ENCODE measurements at regions of chr1 and their contacts with region 1.

Region 1: GRCh38 chr1:206030714-206031113 is 7.0 kb upstream of the CTSE start:
- DNase-seq: peak; percentile 95
- H3K4me3 Mint-ChIP-seq: no peak overlapping the region
- H3K27ac Mint-ChIP-seq: no peak overlapping the region
- H3K4me1 Mint-ChIP-seq: peaks cover 32% of the 10 kb centered on the region
- H3K27me3 Mint-ChIP-seq: peaks cover 11% of the 10 kb centered on the region
- CTCF ChIP-seq: peak; percentile 95

Region 2: GRCh38 chr1:205791568-205792180 is 239.0 kb before region 1 on chr1:
- CTCF ChIA-PET with region 1: interaction called, 10 read pairs
- POLR2A ChIA-PET with region 1: no interaction called
- intact Hi-C with region 1: no loop called
- DNase-seq: peak; percentile 89
- H3K4me3 Mint-ChIP-seq: no peak overlapping the region
- H3K27ac Mint-ChIP-seq: no peak overlapping the region
- H3K4me1 Mint-ChIP-seq: no peaks in the 10 kb centered on the region
- H3K27me3 Mint-ChIP-seq: no peaks in the 10 kb centered on the region
- CTCF ChIP-seq: peak; percentile 99

Region 3: GRCh38 chr1:205994346-205994745 is 36.4 kb before region 1 on chr1:
- CTCF ChIA-PET with region 1: interaction called, 57 read pairs
- POLR2A ChIA-PET with region 1: interaction called, 39 read pairs
- intact Hi-C with region 1: no loop called
- DNase-seq: no peak
- H3K4me3 Mint-ChIP-seq: no peak overlapping the region
- H3K27ac Mint-ChIP-seq: no peak overlapping the region
- H3K4me1 Mint-ChIP-seq: peaks cover 8% of the 10 kb centered on the region
- H3K27me3 Mint-ChIP-seq: no peaks in the 10 kb centered on the region
- CTCF ChIP-seq: no peak

Region 4: GRCh38 chr1:206011057-206011456 is 19.7 kb before region 1 on chr1:
- CTCF ChIA-PET with region 1: interaction called, 17 read pairs
- POLR2A ChIA-PET with region 1: interaction called, 6 read pairs
- intact Hi-C with region 1: no loop called
- DNase-seq: peak; percentile 54
- H3K4me3 Mint-ChIP-seq: no peak overlapping the region
- H3K27ac Mint-ChIP-seq: no peak overlapping the region
- H3K4me1 Mint-ChIP-seq: no peaks in the 10 kb centered on the region
- H3K27me3 Mint-ChIP-seq: no peaks in the 10 kb centered on the region
- CTCF ChIP-seq: no peak

Region 5: DNA sequence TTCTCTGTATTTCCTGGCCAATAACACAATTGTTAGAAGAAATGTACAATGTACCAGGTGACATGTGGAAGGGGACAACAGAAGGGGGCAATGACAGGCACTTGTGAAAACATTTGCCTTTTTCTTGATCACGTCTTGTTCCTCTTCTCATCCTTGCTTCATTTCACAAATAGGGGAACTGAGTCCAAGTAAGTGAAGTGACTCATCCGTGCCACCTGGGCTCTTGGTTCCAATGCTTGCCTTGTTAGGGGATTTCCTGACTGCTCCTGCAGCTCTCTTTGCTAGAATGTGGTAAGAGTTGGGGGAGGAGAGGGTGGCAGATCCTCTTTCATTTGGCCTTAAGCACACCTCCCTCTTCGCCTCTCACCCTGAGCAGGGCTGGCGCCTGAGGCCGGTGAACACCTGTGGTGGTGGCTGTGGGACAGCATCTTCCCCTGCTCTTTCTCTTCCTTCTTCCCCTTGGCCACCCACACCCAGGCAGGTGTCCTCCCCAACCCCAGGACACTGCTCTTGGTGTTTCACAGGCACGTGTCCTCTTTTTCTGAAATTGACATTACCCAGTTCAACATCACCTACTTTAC is 20.0 kb after region 1 on chr1:
- CTCF ChIA-PET with region 1: interaction called, 72 read pairs
- POLR2A ChIA-PET with region 1: interaction called, 6 read pairs
- intact Hi-C with region 1: no loop called
- DNase-seq: peak; percentile 86
- H3K4me3 Mint-ChIP-seq: no peak overlapping the region
- H3K27ac Mint-ChIP-seq: no peak overlapping the region
- H3K4me1 Mint-ChIP-seq: peaks cover 14% of the 10 kb centered on the region
- H3K27me3 Mint-ChIP-seq: no peaks in the 10 kb centered on the region
- CTCF ChIP-seq: no peak